ENCODE measurements at regions of chr5 and their contacts with region 1.

Region 1: GRCh38 chr5:157354800-157355199 is 88.9 kb downstream of the CYFIP2 start:
- DNase-seq: peak; percentile 27
- H3K4me3 ChIP-seq: no peak overlapping the region; a peak in 1 of 4 replicates
- H3K27ac ChIP-seq: no peak overlapping the region
- H3K4me1 ChIP-seq: peaks cover 0 to 9% of the 10 kb centered on the region in 2 experiments; a peak in 2 of 4 replicates
- H3K27me3 ChIP-seq: no peaks in the 10 kb centered on the region
- CTCF ChIP-seq: peak; percentile 45
- EP300 ChIP-seq: no peak
- RAD21 ChIP-seq: no peak

Region 2: GRCh38 chr5:157342822-157343402 is 11.9 kb before region 1 on chr5:
- CTCF ChIA-PET with region 1: interaction called, 14 read pairs
- POLR2A ChIA-PET with region 1: no interaction called
- DNase-seq: peak; percentile 62
- H3K4me3 ChIP-seq: no peak overlapping the region
- H3K27ac ChIP-seq: no peak overlapping the region
- H3K4me1 ChIP-seq: no peaks in the 10 kb centered on the region
- H3K27me3 ChIP-seq: no peaks in the 10 kb centered on the region
- CTCF ChIP-seq: peak; percentile 57
- EP300 ChIP-seq: no peak
- RAD21 ChIP-seq: peak; percentile 50

Region 3: GRCh38 chr5:157459715-157460599 is 105.2 kb after region 1 on chr5 and contains the start of gene NIPAL4:
- CTCF ChIA-PET with region 1: no interaction called
- POLR2A ChIA-PET with region 1: no interaction called
- DNase-seq: peak; percentile 77
- H3K4me3 ChIP-seq: peak within 1 kb of the TSS; percentile 62 to 65
- H3K27ac ChIP-seq: no peak within 1 kb of the TSS
- H3K4me1 ChIP-seq: peaks cover 11 to 13% of the 10 kb centered on the region in 2 experiments; a peak in 3 of 4 replicates
- H3K27me3 ChIP-seq: no peaks in the 10 kb centered on the region
- CTCF ChIP-seq: no peak
- EP300 ChIP-seq: no peak
- RAD21 ChIP-seq: no peak
- polyA plus RNA-seq, gene NIPAL4: 2.3 and 2.6 TPM in 2 replicates